ENCODE measurements at regions of chr2 and their contacts with region 1.

Region 1: GRCh38 chr2:168246483-168247340 is 683 bp downstream of the STK39 start:
- DNase-seq: peak; percentile 83
- H3K4me3 Mint-ChIP-seq: peak overlapping the region; percentile 93
- H3K27ac Mint-ChIP-seq: peak overlapping the region; percentile 89
- H3K4me1 Mint-ChIP-seq: peaks cover 38% of the 10 kb centered on the region
- H3K27me3 Mint-ChIP-seq: no peaks in the 10 kb centered on the region

Region 2: DNA sequence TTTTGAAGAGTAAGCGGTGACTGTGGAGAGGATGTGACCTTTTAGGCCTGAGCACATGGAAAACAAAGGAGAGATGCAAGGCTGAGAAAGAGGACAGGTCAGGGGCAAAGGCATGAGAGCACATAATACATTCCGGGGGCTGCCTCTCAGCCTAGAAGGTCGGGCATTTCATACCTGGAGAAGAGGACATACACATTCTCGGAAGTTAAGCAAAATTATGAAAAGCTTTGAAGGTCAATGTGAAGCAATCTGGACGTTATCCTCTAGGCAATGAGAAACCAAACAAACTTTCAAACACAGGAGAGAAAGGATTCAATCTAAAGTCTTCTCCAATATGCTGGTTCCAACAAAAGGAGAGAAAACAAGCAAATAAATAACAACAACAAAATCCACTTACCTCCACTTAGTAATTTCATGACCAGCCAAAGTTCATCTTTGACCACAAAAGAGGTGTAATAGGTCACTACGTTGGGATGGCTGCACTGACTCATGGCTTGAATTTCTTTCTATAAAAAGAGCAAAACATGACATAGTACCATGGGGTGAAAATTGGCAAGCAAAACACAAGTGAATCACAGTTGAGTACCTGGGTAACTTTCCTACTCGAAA is 79.7 kb before region 1 on chr2:
- CTCF ChIA-PET with region 1: no interaction called
- POLR2A ChIA-PET with region 1: no interaction called
- intact Hi-C with region 1: loop called (anchors 1 kb)
- DNase-seq: peak; percentile 37
- H3K4me3 Mint-ChIP-seq: no peak overlapping the region
- H3K27ac Mint-ChIP-seq: peak overlapping the region; percentile 26
- H3K4me1 Mint-ChIP-seq: peaks cover 39% of the 10 kb centered on the region
- H3K27me3 Mint-ChIP-seq: no peaks in the 10 kb centered on the region

Region 3: GRCh38 chr2:168210895-168211570 is 35.7 kb before region 1 on chr2:
- CTCF ChIA-PET with region 1: interaction called, 6 read pairs
- POLR2A ChIA-PET with region 1: interaction called, 8 read pairs
- intact Hi-C with region 1: loop called (anchors 1 kb)
- DNase-seq: no peak
- H3K4me3 Mint-ChIP-seq: peak overlapping the region; percentile 54
- H3K27ac Mint-ChIP-seq: peak overlapping the region; percentile 98
- H3K4me1 Mint-ChIP-seq: peaks cover 78% of the 10 kb centered on the region
- H3K27me3 Mint-ChIP-seq: no peaks in the 10 kb centered on the region

Region 4: GRCh38 chr2:168231609-168232241 is 15.0 kb before region 1 on chr2:
- CTCF ChIA-PET with region 1: no interaction called
- POLR2A ChIA-PET with region 1: no interaction called
- intact Hi-C with region 1: loop called (anchors 1 kb)
- DNase-seq: no peak
- H3K4me3 Mint-ChIP-seq: no peak overlapping the region
- H3K27ac Mint-ChIP-seq: no peak overlapping the region
- H3K4me1 Mint-ChIP-seq: peaks cover 46% of the 10 kb centered on the region
- H3K27me3 Mint-ChIP-seq: no peaks in the 10 kb centered on the region

Region 5: GRCh38 chr2:168311261-168311910 is 64.7 kb after region 1 on chr2:
- CTCF ChIA-PET with region 1: no interaction called
- POLR2A ChIA-PET with region 1: no interaction called
- intact Hi-C with region 1: no loop called
- DNase-seq: no peak
- H3K4me3 Mint-ChIP-seq: no peak overlapping the region
- H3K27ac Mint-ChIP-seq: no peak overlapping the region
- H3K4me1 Mint-ChIP-seq: no peaks in the 10 kb centered on the region
- H3K27me3 Mint-ChIP-seq: no peaks in the 10 kb centered on the region

Region 6: DNA sequence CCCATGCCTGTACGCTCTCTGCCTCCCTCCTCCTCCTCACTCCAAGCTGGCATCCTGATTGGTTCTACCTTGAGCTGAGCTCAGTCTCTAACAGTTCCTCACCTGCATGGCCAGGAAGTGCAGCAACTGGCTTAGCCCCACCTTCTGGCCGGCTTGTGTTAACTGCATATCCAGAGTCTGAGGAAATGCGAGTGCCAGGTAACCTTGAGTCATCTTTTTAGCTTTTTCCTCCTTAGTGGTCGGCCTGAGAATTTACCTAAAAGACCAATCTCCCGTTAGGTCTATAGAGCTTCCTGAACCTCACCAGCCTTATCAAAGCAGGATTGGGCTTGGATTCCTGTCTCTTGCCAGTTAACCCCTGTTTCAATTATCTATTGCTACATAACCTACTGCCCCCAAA is 90.2 kb after region 1 on chr2:
- CTCF ChIA-PET with region 1: interaction called, 3 read pairs
- POLR2A ChIA-PET with region 1: no interaction called
- intact Hi-C with region 1: loop called (anchors 2 kb)
- DNase-seq: peak; percentile 72
- H3K4me3 Mint-ChIP-seq: no peak overlapping the region
- H3K27ac Mint-ChIP-seq: no peak overlapping the region
- H3K4me1 Mint-ChIP-seq: peaks cover 8% of the 10 kb centered on the region
- H3K27me3 Mint-ChIP-seq: no peaks in the 10 kb centered on the region

Region 7: DNA sequence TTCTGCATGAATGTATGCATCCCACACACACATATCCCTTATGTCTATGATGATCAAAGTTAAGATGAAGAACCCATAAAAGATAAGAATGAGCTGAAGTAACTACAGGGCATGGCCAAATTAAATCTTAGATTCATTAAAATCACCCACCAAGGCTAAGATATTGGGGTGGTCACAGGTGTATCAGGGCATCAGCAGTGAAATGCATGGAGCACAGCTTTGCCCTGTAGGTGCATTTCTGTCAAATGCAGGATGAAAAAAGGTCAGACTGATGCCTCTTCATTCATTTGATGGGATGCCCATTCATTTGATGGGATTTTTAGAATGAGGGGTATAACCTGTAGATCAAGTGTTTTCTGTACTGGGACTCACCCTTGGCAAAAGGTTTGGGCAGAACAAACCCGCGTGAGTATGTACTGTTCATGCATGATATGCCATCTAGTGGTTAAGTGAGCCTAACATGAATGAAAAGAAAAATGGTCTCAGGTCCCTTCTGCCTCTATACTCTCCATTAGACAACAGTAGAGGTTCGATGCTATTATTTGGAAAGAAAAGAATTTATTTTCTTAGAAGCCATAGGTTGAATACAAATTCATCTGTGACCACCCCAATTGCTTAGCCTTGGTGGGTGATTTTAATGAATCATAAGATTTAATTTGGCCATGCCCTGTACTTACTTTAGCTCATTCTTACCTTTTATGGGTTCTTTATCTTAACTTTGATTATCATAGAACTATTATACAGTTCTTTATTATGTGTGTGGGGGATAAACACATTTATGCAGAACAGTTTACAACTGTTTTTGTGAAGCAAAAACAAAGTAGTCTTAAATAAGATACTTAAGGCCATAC is 512.5 kb after region 1 on chr2:
- CTCF ChIA-PET with region 1: no interaction called
- POLR2A ChIA-PET with region 1: no interaction called
- intact Hi-C with region 1: loop called (anchors 10 kb)
- DNase-seq: peak; percentile 21
- H3K4me3 Mint-ChIP-seq: no peak overlapping the region
- H3K27ac Mint-ChIP-seq: no peak overlapping the region
- H3K4me1 Mint-ChIP-seq: peaks cover 39% of the 10 kb centered on the region
- H3K27me3 Mint-ChIP-seq: no peaks in the 10 kb centered on the region